Naive thymus-derived CD8-positive, alpha-beta T cell (primary cell): ENCODE measurements at regions of chr2 and their contacts with region 1.

Region 1: DNA sequence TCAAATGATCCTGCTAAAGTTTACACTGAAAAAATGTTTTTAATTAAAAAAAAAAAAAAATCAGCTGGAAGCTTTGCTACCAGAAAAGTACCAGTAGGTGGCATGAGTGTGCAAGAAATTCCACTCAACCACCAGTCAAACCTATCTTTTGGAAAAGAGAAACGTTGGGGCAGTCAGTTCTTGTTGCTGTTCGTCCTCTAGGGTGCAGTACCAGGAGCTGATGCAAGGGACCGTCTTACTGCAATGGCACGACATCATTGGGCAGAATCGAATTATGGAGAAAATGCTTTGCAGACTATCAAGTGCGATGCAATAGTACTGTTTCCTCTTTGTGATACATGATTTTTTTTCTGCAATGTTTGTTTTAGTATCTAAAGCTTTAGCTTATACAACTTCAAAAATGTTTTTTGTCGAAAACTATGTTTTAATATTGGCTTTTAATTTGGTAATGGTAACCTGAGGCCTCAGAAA is 18.3 kb downstream of the YPEL5 start:
- DNase-seq: peak in 9 of 10 donors; percentile 48 to 87 (median 76)
- ATAC-seq: peak; percentile 56 to 73
- H3K4me3 Mint-ChIP-seq: peak overlapping the region in 1 of 10 donors; percentile 27
- H3K27ac Mint-ChIP-seq: peak overlapping the region in 4 of 10 donors; percentile 42 to 91 (median 68)
- H3K4me1 Mint-ChIP-seq: peaks cover 1 to 31% (median 11%) of the 10 kb centered on the region in 4 donors
- H3K27me3 Mint-ChIP-seq: no peaks in the 10 kb centered on the region

Region 2: GRCh38 chr2:30261695-30262211 is 96.7 kb after region 1 on chr2:
- POLR2A ChIA-PET with region 1: no interaction called
- DNase-seq: no peak
- ATAC-seq: no peak
- H3K4me3 Mint-ChIP-seq: peak overlapping the region in 5 of 10 donors; percentile 20 to 41 (median 31)
- H3K27ac Mint-ChIP-seq: peak overlapping the region; percentile 69 to 98 (median 96)
- H3K4me1 Mint-ChIP-seq: peaks cover 49 to 97% (median 93%) of the 10 kb centered on the region in 4 donors
- H3K27me3 Mint-ChIP-seq: no peaks in the 10 kb centered on the region

Region 3: DNA sequence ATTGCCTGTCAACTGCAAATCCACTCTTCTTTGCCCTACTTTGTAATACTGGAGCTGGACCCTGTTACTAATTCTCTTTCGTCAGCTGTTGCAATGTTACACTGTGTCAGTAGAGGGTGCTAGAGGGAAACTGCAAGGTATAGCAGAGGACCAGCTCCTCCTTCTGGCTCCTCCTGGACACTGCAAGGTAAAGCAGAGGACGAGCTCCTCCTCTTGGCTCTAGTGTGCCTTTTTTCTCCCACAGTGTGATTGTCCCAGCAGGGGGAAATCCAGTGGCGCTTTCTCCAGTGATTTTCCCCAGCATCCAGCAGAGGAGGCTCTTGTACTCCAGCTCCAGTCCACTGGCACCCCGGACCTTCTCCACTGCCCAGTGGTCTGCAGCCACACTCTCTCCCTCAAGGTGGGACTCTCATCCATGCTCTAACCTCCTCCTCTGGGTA is 546.6 kb after region 1 on chr2:
- POLR2A ChIA-PET with region 1: interaction called, 20 read pairs
- DNase-seq: peak; percentile 51 to 94 (median 86)
- ATAC-seq: peak; percentile 81 to 88
- H3K4me3 Mint-ChIP-seq: no peak overlapping the region
- H3K27ac Mint-ChIP-seq: peak overlapping the region in 1 of 10 donors; percentile 5
- H3K4me1 Mint-ChIP-seq: peaks cover 6 to 18% (median 12%) of the 10 kb centered on the region in 4 donors
- H3K27me3 Mint-ChIP-seq: peaks cover 0 to 2% (median 0%) of the 10 kb centered on the region in 5 donors